A549 (cell line): ENCODE measurements at regions of chr1 and their contacts with region 1.

Region 1: DNA sequence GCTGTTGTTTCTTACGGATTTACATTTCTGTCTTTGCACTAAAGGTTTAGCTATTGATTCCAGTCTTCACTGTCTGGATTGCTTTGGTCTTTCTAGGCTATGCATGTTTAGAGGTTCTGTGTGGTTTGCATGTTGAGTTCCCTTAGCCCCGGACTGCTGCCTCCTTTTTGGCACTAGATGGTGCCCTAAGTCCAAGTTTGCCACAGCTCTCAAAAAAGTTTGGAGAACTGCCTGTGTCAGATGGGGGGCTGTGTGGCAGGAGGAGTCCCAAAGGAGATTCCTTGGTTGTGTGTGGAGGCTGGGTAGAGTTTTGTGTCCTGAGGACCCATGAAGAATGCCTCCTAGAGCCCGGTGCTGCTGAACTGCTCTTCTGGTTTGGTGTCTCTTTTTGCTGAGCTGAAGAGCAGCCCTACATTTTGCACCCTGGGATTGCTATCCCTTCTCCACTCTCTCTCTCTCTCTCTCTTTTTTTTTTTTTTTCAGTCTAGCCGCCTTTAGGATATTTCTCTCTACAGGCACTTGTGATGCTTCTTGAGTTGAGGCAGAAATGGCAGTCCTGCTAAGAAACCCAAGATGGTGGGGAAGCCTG is 74.4 kb downstream of the PTGS2 start:
- DNase-seq: peak in 1 of 2 experiments; percentile 73
- ATAC-seq: peak; percentile 81 to 94
- H3K4me3 ChIP-seq: no peak overlapping the region
- H3K27ac ChIP-seq: peak overlapping the region; percentile 15 to 71; a peak in 3 of 6 replicates
- H3K4me1 ChIP-seq: no peaks in the 10 kb centered on the region
- CTCF ChIP-seq: peak; percentile 75
- EP300 ChIP-seq: no peak
- POLR2A ChIP-seq: no peak
- RAD21 ChIP-seq: peak; percentile 93 to 96

Region 2: DNA sequence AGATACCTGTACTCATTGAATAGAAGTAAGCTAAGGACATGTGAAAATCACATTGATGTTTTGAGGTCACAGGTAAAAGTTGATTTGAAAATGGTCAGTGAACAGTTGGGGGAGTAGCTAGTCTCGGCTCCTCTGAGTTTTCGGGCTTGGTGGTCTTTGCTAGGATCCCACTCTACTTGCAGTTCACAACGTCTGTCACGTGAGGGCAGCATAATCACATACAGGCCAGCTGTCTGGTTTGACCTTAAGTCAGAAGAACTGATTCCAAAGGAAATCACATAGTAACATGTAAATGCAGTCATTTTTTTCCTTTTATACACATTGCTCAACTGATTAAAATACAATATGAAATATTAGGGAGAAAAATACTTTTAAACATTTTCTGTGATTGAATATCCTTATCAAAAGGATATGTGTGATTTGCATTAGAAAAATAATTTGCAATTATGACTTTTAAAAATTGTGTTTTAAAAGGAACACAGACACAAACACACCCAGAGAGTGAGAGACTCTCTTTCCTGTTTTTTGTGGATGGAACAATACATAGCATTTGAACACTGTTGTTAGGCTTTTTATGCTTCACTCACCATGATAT is 123.1 kb before region 1 on chr1:
- CTCF ChIA-PET with region 1: interaction called, 10 read pairs
- POLR2A ChIA-PET with region 1: no interaction called
- DNase-seq: peak; percentile 41 to 77
- ATAC-seq: peak; percentile 83 to 90
- H3K4me3 ChIP-seq: no peak overlapping the region
- H3K27ac ChIP-seq: peak overlapping the region; percentile 17 to 38; a peak in 5 of 6 replicates
- H3K4me1 ChIP-seq: peaks cover 23% of the 10 kb centered on the region; the same call in 2 of the 3 replicates
- CTCF ChIP-seq: peak; percentile 98
- EP300 ChIP-seq: no peak
- POLR2A ChIP-seq: no peak
- RAD21 ChIP-seq: peak; percentile 99 to 100

Region 3: GRCh38 chr1:186618401-186619170 is 12.7 kb after region 1 on chr1:
- CTCF ChIA-PET with region 1: interaction called, 12 read pairs
- POLR2A ChIA-PET with region 1: no interaction called
- DNase-seq: peak; percentile 53 to 67
- ATAC-seq: peak; percentile 73 to 74; a peak in 5 of 6 replicates
- H3K4me3 ChIP-seq: peak overlapping the region; percentile 44
- H3K27ac ChIP-seq: peak overlapping the region; percentile 79
- H3K4me1 ChIP-seq: peaks cover 7% of the 10 kb centered on the region
- CTCF ChIP-seq: no peak
- EP300 ChIP-seq: no peak
- POLR2A ChIP-seq: no peak
- RAD21 ChIP-seq: no peak

Region 4: GRCh38 chr1:186680245-186681061 is 74.6 kb after region 1 on chr1 and contains the start of gene PTGS2:
- CTCF ChIA-PET with region 1: interaction called, 15 read pairs
- POLR2A ChIA-PET with region 1: no interaction called
- DNase-seq: peak; percentile 84 to 97
- ATAC-seq: peak; percentile 98 to 99
- H3K4me3 ChIP-seq: peak within 1 kb of the TSS; percentile 72
- H3K27ac ChIP-seq: peak within 1 kb of the TSS; percentile 93
- H3K4me1 ChIP-seq: peaks cover 35% of the 10 kb centered on the region
- CTCF ChIP-seq: peak; percentile 48
- EP300 ChIP-seq: peak; percentile 55 to 75; a peak in 3 of 5 replicates
- POLR2A ChIP-seq: peak; percentile 90
- RAD21 ChIP-seq: peak; percentile 35 to 58; a peak in 4 of 5 replicates
- polyA plus RNA-seq, gene PTGS2: 127 and 140 TPM in 2 replicates

Region 5: GRCh38 chr1:186806477-186806876 is 200.6 kb after region 1 on chr1:
- CTCF ChIA-PET with region 1: interaction called, 16 read pairs
- POLR2A ChIA-PET with region 1: no interaction called
- DNase-seq: peak; percentile 23 to 77
- ATAC-seq: peak; percentile 81 to 91
- H3K4me3 ChIP-seq: no peak overlapping the region
- H3K27ac ChIP-seq: peak overlapping the region in 1 of 2 experiments; percentile 35; a peak in 1 of 6 replicates
- H3K4me1 ChIP-seq: peaks cover 11% of the 10 kb centered on the region
- CTCF ChIP-seq: peak; percentile 57
- EP300 ChIP-seq: no peak
- POLR2A ChIP-seq: no peak
- RAD21 ChIP-seq: peak; percentile 82 to 83